ENCODE measurements at regions of chr16 and their contacts with region 1.

Region 1: DNA sequence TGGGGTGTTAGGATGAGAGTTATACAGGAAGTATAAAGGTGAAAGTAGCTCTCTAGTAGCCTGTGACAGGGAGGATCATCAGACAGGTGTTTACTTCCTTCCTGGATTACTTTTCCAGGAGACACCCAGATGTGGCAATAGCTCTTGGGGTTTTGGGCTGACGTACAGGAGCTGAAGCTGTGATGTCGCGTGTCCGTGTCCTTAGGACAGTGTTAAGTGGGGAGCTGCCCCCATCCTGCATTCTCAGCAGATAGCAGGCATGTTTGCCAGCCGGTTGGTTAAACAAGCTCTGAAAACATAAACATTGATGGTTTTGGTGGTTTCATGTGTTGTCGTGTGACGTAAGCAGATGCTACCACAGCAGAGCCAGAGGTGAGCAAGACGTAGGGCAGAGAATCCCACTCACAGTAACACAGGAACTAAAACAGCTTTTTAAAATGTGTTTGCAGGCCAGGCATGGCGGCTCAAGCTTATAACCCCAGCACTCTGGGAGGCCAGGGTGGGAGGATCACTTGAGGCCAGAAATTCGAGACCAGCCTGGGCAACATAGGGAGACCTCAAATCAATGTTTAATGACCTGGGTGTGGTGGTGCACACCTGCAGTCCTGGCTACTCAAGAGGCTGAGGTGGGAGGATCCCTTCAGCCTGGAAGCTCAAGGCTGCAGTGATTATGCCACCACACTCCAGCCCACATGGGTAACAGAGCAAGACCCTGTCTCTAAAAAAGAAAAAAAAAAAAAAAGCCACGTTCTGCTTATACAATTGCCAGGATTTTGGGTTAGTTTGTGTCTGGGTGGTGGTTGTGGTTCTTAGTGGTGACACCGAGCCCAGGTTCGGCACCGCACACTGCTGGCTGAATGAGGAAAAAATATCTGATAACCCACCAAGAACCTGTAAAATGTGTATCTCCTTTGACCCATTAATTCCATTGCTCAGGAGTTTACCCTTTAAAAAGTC is 18.2 kb upstream of the IL17C start:
- DNase-seq: peak; percentile 28 to 92 (median 76)
- ATAC-seq: peak; percentile 83 to 88 (median 86)
- H3K4me3 ChIP-seq: no peak overlapping the region
- H3K4me3 Mint-ChIP-seq: peak overlapping the region; percentile 15 to 50 (median 47)
- H3K27ac ChIP-seq: peak overlapping the region; percentile 93
- H3K27ac Mint-ChIP-seq: peak overlapping the region; percentile 96
- H3K4me1 ChIP-seq: peaks cover 0 to 47% of the 10 kb centered on the region in 2 experiments
- H3K4me1 Mint-ChIP-seq: peaks cover 34 to 51% (median 43%) of the 10 kb centered on the region in 3 donors
- H3K27me3 ChIP-seq: no peaks in the 10 kb centered on the region
- H3K27me3 Mint-ChIP-seq: no peaks in the 10 kb centered on the region

Region 2: DNA sequence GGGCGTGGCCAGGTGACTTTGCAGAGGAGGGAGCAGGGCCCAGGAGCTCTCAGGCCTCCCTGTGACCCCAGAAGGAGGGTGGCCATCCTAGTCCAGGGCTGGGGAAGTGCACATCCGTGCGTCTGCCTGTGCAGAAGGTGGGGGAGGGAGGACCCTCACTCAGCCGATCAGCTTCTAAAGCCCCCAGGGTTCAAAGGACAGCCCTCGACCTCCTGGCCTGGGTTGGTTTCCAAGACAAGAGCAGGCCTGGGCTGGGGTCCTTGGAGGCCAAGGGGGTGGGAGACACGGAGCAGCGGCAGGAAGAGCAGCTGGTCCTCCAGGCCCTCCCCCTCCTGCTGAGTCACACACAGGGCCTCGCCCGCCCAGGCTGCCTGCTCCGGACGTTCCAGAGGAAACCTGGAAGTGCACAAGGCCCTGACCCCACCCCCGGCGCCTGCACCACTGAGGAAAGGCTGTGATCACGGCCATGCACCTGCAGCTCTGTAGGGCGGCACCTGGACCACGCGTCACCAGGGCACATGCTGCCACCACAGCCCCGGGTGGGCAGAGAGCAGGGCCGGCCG is 304.5 kb before region 1 on chr16:
- CTCF ChIA-PET with region 1: no interaction called
- POLR2A ChIA-PET with region 1: no interaction called
- DNase-seq: no peak
- ATAC-seq: no peak
- H3K4me3 ChIP-seq: no peak overlapping the region
- H3K4me3 Mint-ChIP-seq: no peak overlapping the region
- H3K27ac ChIP-seq: no peak overlapping the region
- H3K27ac Mint-ChIP-seq: no peak overlapping the region
- H3K4me1 ChIP-seq: no peaks in the 10 kb centered on the region
- H3K4me1 Mint-ChIP-seq: peaks cover 0 to 2% (median 0%) of the 10 kb centered on the region in 3 donors
- H3K27me3 ChIP-seq: peaks cover 0 to 36% of the 10 kb centered on the region in 2 experiments
- H3K27me3 Mint-ChIP-seq: peaks cover 4 to 6% of the 10 kb centered on the region in 2 donors

Region 3: DNA sequence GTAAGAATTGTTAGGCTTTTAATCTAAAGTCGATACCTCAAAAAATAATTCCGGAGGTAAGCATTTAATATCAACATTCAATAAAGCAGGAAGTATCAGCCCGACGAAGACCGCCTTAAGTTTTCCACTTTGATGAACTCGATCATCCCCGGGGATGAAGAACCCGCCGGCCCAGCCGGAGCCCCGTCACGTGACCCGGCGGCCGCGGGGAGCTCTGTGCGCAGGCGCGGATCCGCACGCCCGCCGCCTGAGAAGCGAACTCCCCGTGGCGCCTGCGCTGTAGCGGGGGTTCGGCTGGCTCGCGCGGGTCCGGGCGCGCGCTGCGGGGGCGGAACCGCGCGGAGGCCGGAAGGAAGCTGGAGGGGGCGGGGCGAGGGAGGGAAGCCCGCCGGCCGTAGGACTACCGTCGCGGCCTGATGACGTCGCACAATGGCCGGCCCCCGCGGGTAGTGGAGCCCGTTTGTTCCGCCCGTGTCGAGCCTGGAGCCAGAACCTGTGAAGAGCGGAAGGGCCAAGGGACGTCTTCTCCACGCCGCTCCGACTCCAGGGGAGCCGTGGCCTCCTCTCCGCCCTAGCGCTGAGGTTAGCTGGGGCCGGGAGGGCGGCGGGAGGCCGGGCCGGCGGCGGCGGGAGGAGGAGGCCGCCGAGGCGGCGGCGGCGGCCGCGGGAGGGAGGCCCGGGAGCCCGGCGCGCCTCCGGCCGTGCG is 50.0 kb before region 1 on chr16 and contains the start of gene ZC3H18:
- CTCF ChIA-PET with region 1: interaction called in 1 of 2 experiments, 10 read pairs
- POLR2A ChIA-PET with region 1: interaction called in 1 of 2 experiments, 12 read pairs
- DNase-seq: peak; percentile 92 to 100 (median 96)
- ATAC-seq: peak; percentile 89 to 93 (median 92)
- H3K4me3 ChIP-seq: peak within 1 kb of the TSS; percentile 69 to 92
- H3K4me3 Mint-ChIP-seq: peak within 1 kb of the TSS; percentile 80 to 84 (median 82)
- H3K27ac ChIP-seq: peak within 1 kb of the TSS; percentile 64
- H3K27ac Mint-ChIP-seq: peak within 1 kb of the TSS; percentile 78 to 88
- H3K4me1 ChIP-seq: peaks cover 9 to 31% of the 10 kb centered on the region in 2 experiments
- H3K4me1 Mint-ChIP-seq: peaks cover 29 to 37% (median 36%) of the 10 kb centered on the region in 3 donors
- H3K27me3 ChIP-seq: no peaks in the 10 kb centered on the region
- H3K27me3 Mint-ChIP-seq: no peaks in the 10 kb centered on the region
- total RNA-seq, gene ZC3H18: 87.0 to 111 (median 91.5) TPM

Region 4: DNA sequence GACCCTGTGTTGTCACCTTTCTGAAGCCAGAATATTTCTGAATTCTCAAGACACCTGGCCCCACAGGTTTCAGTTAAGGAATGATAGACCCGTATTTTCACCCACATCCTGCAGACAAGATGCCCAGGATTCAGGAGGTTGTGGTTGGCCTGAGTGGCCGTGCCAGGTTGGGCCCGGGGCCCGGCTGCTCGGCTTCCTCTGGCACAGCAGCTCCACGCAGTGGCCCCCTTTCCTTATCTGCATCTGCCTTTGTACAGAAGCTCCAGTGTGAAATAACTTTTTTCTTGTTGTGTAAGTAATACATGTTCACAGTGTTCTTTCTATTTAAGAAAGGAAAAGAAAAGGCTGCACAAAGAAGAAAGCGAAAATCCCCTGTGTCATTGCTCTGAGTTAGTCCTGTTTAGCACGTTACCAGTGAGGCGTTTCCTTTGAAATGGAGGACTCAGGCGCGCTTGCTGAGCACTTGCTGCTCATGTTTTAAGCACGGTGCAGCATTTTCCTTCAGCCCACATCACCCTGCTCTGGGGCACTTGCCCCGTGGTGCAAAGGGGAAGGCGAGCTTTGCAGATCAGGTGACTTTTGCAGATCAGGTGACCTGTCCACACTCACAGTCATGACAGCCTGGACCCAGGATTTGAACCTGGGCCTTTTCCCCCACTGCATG is 37.1 kb before region 1 on chr16:
- CTCF ChIA-PET with region 1: no interaction called
- POLR2A ChIA-PET with region 1: no interaction called
- DNase-seq: no peak
- ATAC-seq: peak in 2 of 4 experiments; percentile 19 to 28
- H3K4me3 ChIP-seq: no peak overlapping the region
- H3K4me3 Mint-ChIP-seq: no peak overlapping the region
- H3K27ac ChIP-seq: no peak overlapping the region
- H3K27ac Mint-ChIP-seq: peak overlapping the region; percentile 23 to 28
- H3K4me1 ChIP-seq: peaks cover 0 to 38% of the 10 kb centered on the region in 2 experiments
- H3K4me1 Mint-ChIP-seq: peaks cover 43 to 62% (median 55%) of the 10 kb centered on the region in 3 donors
- H3K27me3 ChIP-seq: no peaks in the 10 kb centered on the region
- H3K27me3 Mint-ChIP-seq: no peaks in the 10 kb centered on the region

Region 5: GRCh38 chr16:88638338-88639230 is 18.4 kb after region 1 on chr16 and contains the start of gene IL17C:
- CTCF ChIA-PET with region 1: interaction called in 1 of 2 experiments, 23 read pairs
- POLR2A ChIA-PET with region 1: no interaction called
- DNase-seq: peak in 13 of 35 experiments; percentile 16 to 51 (median 31)
- ATAC-seq: peak in 1 of 4 experiments; percentile 9
- H3K4me3 ChIP-seq: peak within 1 kb of the TSS; percentile 5 to 12
- H3K4me3 Mint-ChIP-seq: peak within 1 kb of the TSS in 2 of 3 donors; percentile 25 to 64
- H3K27ac ChIP-seq: peak within 1 kb of the TSS; percentile 78
- H3K27ac Mint-ChIP-seq: peak within 1 kb of the TSS; percentile 51 to 66
- H3K4me1 ChIP-seq: peaks cover 15 to 79% of the 10 kb centered on the region in 2 experiments
- H3K4me1 Mint-ChIP-seq: peaks cover 33 to 53% (median 42%) of the 10 kb centered on the region in 3 donors
- H3K27me3 ChIP-seq: peaks cover 0 to 60% of the 10 kb centered on the region in 2 experiments
- H3K27me3 Mint-ChIP-seq: peaks cover 8 to 17% of the 10 kb centered on the region in 2 donors
- total RNA-seq, gene IL17C: 0.35 to 0.93 (median 0.39) TPM in 3 of 5 donors, not detected in the others

Measured in T-cell (primary cell).